ENCODE measurements at regions of chr6 and their contacts with region 1.

Region 1: DNA sequence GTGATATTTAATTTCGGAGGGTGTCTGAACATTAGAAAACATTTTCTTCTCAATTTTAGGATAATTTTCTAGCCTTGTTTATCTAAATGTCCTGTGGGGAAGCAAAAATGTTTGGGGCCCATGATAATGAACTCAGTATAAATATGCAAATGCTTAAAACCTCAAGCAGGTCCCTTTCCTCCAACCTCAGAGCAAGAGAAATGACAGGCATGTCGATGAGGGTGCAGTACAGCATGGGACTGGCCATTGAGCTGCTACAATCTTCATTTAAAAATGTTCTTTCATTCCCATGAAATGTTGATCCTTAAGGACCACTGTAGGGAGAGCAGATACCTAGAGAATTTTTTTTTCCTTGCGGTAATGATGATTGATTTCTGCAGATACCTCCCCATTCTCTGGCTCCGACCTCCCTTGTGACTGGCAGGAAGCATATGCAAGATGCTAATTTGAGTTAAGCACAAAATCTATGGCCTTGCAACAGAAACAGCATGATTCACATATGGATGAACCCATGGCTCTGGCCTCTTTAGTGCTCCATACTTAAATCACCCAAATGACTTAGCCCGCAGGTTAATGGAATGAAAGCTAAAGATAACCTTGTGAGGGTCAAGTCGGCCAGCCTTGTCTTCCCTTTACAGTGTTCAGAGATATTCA is 243.3 kb downstream of the SOX4 start:
- DNase-seq: no peak
- H3K4me3 Mint-ChIP-seq: no peak overlapping the region
- H3K27ac Mint-ChIP-seq: no peak overlapping the region
- H3K4me1 Mint-ChIP-seq: peaks cover 32% of the 10 kb centered on the region
- H3K27me3 Mint-ChIP-seq: no peaks in the 10 kb centered on the region

Region 2: DNA sequence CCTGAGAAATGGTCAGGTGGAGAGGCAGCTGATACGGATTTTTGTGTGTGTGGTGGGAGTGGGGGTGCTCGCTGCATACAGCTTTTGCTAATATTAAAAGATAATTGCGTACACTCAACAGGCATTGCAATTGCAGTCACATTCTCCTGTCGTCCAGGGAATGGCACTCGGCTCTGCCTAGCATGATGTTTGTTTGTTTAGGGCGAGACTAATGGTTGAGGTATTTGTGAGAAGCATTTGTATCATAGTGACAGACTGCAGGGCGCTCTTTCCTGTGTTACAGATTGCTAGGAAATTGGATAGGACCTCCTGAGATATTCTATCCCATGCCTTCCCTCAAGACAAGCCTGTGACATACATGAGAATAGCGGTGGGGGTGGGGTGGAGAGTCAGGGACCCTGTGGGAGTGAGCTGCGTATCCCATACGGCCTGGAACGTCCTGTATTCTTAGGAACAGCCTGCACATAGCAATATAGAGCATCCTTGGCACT is 35.9 kb before region 1 on chr6:
- intact Hi-C with region 1: no loop called
- DNase-seq: no peak
- H3K4me3 Mint-ChIP-seq: no peak overlapping the region
- H3K27ac Mint-ChIP-seq: no peak overlapping the region
- H3K4me1 Mint-ChIP-seq: no peaks in the 10 kb centered on the region
- H3K27me3 Mint-ChIP-seq: no peaks in the 10 kb centered on the region

Region 3: DNA sequence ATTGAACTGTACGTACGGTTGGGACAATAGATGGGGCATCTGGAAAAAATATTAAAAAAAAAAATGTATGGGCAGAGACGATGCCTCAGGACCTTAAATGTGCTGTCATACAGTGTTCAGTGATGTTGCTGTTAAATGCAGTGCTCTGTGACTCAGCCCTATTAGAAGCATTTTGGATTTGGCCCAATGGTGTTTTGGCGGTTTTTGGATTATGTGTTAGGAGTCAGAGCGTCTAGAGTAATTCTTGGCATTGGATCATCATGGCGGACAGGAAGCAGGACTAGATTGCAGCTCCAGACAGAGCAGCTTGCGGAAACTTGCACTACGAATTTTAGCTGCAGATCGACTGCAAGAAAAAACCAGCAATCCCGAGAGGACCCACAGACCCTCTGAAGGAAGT is 36.7 kb after region 1 on chr6:
- intact Hi-C with region 1: loop called (anchors 5 kb)
- DNase-seq: no peak
- H3K4me3 Mint-ChIP-seq: no peak overlapping the region
- H3K27ac Mint-ChIP-seq: no peak overlapping the region
- H3K4me1 Mint-ChIP-seq: peaks cover 27% of the 10 kb centered on the region
- H3K27me3 Mint-ChIP-seq: no peaks in the 10 kb centered on the region

Region 4: DNA sequence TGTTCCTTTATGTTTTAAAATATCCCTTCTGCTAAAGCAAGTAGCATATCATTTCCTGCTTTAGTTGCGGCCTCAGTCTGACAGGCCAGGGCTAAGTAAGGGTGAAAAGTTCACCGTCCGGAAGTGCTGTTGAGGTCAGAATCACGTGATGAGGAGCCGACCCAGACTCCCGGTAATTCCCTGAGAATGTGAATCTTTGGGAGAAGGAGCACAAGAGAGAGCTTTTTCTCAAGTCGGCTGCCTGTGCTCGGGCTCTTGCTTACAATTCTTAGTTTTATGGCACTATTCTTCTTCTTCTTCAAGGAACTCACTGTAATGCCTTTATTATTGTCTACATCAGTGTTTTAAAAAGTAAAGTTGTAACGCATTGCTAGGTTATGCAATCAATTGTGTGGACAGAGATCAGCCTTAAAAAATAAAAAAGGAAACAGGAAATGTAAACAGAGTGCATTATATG is 150.6 kb after region 1 on chr6:
- intact Hi-C with region 1: no loop called
- DNase-seq: no peak
- H3K4me3 Mint-ChIP-seq: peak overlapping the region; percentile 30
- H3K27ac Mint-ChIP-seq: peak overlapping the region; percentile 17
- H3K4me1 Mint-ChIP-seq: peaks cover 25% of the 10 kb centered on the region
- H3K27me3 Mint-ChIP-seq: no peaks in the 10 kb centered on the region

Measured in activated T-helper 2 cell treated with anti-CD3 and anti-CD28 coated beads, Interferon-gamma antibody, Interleukin-2, Interleukin-4, amounts not matched to agents 10 μg/mL and 5 μg/mL and 100 μg/mL, durations not matched to agents 14 hours and 24 hours and 36 hours (primary cell).